ENCODE measurements at regions of chr7 and their contacts with region 1.

Region 1: DNA sequence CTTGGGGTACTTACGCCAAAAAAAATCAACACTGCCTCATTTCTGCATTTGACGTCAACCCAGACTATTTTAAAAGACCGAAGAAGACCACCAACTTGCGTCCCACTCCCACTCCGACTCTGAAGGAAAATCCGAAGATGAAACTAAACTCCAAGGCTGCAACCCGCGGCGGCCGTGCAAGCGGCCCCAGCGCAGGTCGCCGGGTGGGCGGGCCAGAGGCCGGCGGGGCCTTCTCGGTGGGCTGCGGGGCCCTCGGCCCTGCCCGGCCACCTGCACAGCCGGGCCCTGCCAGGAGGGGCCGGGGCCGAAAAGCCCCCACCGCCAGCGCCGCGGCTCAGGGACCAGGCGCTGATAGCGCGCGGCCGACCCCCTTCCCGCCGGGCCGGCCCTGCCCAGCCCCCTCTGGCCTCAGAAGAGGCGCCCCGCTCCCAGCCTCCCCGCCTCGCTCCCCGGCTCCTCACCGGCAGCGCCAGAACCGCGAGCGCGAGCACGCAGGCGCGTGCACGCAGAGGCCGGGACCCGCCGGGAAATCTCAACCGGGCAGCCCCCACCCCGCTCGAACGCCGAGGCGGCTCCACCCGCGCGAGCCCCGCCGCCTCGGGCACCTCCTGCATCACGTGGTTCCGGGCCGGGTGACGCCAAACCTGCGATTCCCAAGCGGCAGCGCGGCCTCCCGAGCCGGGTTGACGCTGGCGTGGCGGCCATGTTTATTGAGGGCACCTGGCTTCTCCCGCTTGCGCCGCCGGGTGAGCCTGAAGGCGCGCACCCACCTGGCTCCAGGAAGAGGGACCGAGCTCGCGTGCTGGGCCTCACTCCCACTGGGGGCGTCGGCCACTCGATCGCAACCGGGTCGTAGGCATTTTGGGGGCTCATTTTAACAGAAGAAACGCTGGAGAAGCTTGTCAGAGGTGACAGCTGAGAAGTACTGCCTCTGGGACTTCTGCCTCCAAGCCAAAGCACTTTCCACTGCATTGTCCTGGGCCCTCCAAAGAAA is at the start of gene C7orf25:
- DNase-seq: peak; percentile 91 to 98
- H3K4me3 ChIP-seq: peak within 1 kb of the TSS; percentile 64 to 85 (median 68)
- H3K27ac ChIP-seq: peak within 1 kb of the TSS; percentile 73
- H3K4me1 ChIP-seq: peaks cover 2 to 11% (median 5%) of the 10 kb centered on the region in 4 experiments; a peak in 6 of 7 replicates
- H3K27me3 ChIP-seq: no peaks in the 10 kb centered on the region
- CTCF ChIP-seq: 0 out of 4 replicates have a peak, but pooled peaks of 1 of the 3 experiments have one; percentile 3
- EP300 ChIP-seq: no peak
- POLR2A ChIP-seq: peak; percentile 12 to 62; a peak in 2 of 3 replicates
- RAD21 ChIP-seq: no peak
- total RNA-seq, gene C7orf25: 2.6 and 4.5 TPM in 2 replicates

Region 2: GRCh38 chr7:42931834-42932651 is 20.3 kb after region 1 on chr7 and contains the starts of genes MRPL32 and PSMA2:
- CTCF ChIA-PET with region 1: no interaction called
- POLR2A ChIA-PET with region 1: interaction called, 112 read pairs
- DNase-seq: peak; percentile 88 to 90
- H3K4me3 ChIP-seq: peak within 1 kb of the TSS; percentile 83 to 98 (median 94)
- H3K27ac ChIP-seq: peak within 1 kb of the TSS; percentile 89
- H3K4me1 ChIP-seq: peaks cover 0 to 4% (median 0%) of the 10 kb centered on the region in 4 experiments; a peak in 2 of 7 replicates
- H3K27me3 ChIP-seq: no peaks in the 10 kb centered on the region
- CTCF ChIP-seq: no peak
- EP300 ChIP-seq: no peak
- POLR2A ChIP-seq: peak; percentile 82 to 84
- RAD21 ChIP-seq: no peak
- total RNA-seq, gene MRPL32: 94.0 and 97.2 TPM in 2 replicates
- total RNA-seq, gene PSMA2: 243 and 259 TPM in 2 replicates

Measured in H1 (cell line).